HCT116 (cell line): ENCODE measurements at regions of chr19 and their contacts with region 1.

Region 1: GRCh38 chr19:6048808-6049405 is 61.4 kb downstream of the RFX2 start:
- DNase-seq: peak; percentile 59
- ATAC-seq: peak; percentile 99
- H3K4me3 ChIP-seq: no peak overlapping the region
- H3K27ac ChIP-seq: no peak overlapping the region
- H3K4me1 ChIP-seq: peaks cover 3 to 11% of the 10 kb centered on the region in 2 experiments; a peak in 3 of 4 replicates
- H3K27me3 ChIP-seq: no peaks in the 10 kb centered on the region
- CTCF ChIP-seq: peak; percentile 85 to 90 (median 87)
- POLR2A ChIP-seq: no peak
- RAD21 ChIP-seq: peak; percentile 94

Region 2: GRCh38 chr19:5987077-5987818 is 61.7 kb before region 1 on chr19:
- CTCF ChIA-PET with region 1: interaction called, 15 read pairs
- POLR2A ChIA-PET with region 1: no interaction called
- RAD21 ChIA-PET with region 1: no interaction called
- intact Hi-C with region 1: loop called (anchors 1 kb)
- DNase-seq: peak; percentile 60
- ATAC-seq: peak; percentile 61
- H3K4me3 ChIP-seq: no peak overlapping the region
- H3K27ac ChIP-seq: no peak overlapping the region
- H3K4me1 ChIP-seq: peaks cover 0 to 19% of the 10 kb centered on the region in 2 experiments; a peak in 2 of 4 replicates
- H3K27me3 ChIP-seq: no peaks in the 10 kb centered on the region
- CTCF ChIP-seq: peak; percentile 88 to 94 (median 93); a peak in 5 of 6 replicates
- POLR2A ChIP-seq: no peak
- RAD21 ChIP-seq: peak; percentile 85

Region 3: GRCh38 chr19:6297202-6297601 is 248.3 kb after region 1 on chr19:
- CTCF ChIA-PET with region 1: no interaction called
- POLR2A ChIA-PET with region 1: no interaction called
- RAD21 ChIA-PET with region 1: no interaction called
- intact Hi-C with region 1: loop called (anchors 5 kb)
- DNase-seq: no peak
- ATAC-seq: no peak
- H3K4me3 ChIP-seq: no peak overlapping the region
- H3K27ac ChIP-seq: no peak overlapping the region
- H3K4me1 ChIP-seq: no peaks in the 10 kb centered on the region
- H3K27me3 ChIP-seq: no peaks in the 10 kb centered on the region
- CTCF ChIP-seq: no peak
- POLR2A ChIP-seq: no peak
- RAD21 ChIP-seq: no peak

Region 4: GRCh38 chr19:6626764-6627163 is 577.9 kb after region 1 on chr19:
- CTCF ChIA-PET with region 1: no interaction called
- POLR2A ChIA-PET with region 1: no interaction called
- RAD21 ChIA-PET with region 1: no interaction called
- intact Hi-C with region 1: loop called (anchors 5 kb)
- DNase-seq: no peak
- ATAC-seq: no peak
- H3K4me3 ChIP-seq: no peak overlapping the region
- H3K27ac ChIP-seq: no peak overlapping the region
- H3K4me1 ChIP-seq: peaks cover 0 to 2% of the 10 kb centered on the region in 2 experiments; a peak in 1 of 4 replicates
- H3K27me3 ChIP-seq: no peaks in the 10 kb centered on the region
- CTCF ChIP-seq: no peak
- POLR2A ChIP-seq: no peak
- RAD21 ChIP-seq: no peak